ENCODE measurements at regions of chr12 and their contacts with region 1.

Region 1: DNA sequence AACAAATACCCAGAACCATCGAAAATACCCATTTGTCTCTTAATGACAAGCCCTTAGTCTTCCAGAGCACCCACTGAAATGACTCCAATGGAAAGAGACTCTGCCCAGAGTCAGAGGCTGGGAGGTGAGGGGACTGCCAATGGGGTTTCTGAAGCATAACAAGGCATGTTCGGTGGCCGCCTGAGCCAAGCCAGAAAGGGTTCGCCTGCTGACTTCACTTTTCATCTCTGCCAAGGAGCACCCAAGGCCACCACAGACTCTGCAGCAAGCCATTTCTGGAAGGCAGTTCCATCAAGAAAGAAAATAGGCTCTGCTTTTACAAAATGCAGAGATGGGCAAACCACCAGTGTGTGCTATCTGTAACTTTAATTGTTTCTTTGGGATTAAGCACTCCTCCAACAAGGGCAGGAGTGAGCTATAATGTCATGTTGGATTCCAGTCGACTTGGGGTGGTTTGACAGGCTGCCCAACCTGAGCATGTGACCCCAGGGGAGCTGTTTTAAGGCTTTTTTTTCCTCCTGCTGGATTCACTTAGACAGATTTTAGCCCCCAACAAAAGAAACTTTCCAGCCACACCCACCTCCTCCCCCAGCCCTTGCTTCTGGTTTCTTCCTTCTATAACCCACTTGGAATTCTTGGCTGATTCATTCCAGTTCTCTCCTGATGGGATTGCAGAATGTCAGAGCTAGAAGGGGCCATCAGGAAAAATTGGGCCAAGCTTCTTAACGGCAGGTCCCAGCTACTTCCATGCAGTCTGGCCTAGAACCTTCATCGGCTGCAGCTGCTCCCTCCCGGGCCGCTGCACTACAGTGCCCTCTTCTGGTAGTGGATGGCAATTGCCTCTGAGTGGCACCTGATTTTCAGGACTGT is 24.1 kb downstream of the CKAP4 start:
- DNase-seq: peak; percentile 65
- ATAC-seq: peak; percentile 75 to 82

Region 2: GRCh38 chr12:105420659-105421240 is 803.0 kb before region 1 on chr12:
- intact Hi-C with region 1: loop called in 1 of 2 experiments (anchors 1 kb)
- DNase-seq: peak; percentile 75
- ATAC-seq: peak; percentile 87 to 90

Region 3: DNA sequence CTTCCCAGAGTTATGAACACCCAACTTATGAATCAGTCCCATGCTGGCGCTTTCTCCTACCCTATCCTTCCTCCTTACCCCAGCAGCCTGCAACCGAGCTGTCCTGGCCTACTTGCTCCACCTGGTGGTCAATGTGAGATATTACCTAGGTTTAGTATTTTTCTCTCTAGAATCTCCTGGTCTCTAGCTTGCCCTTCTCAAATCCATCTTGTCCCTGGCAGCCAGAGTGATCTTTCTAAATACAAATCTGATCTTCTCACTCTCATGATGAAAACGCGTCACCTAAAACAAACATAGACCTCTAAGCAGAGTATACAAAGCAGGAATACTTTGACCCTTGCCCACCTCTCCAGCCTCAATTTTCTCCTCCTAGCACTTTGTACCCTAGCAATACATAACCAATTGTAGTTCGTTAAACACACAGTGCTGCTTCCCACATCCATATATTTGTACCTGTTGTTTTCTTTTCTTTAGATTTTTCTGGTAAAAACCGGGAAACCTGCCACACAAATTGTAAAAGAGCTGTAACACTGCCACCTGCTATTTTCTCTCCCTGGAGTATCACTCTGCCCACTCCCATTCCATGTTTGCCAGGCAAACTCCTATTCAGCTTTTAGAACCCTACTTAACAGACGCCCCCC is 58.9 kb after region 1 on chr12:
- intact Hi-C with region 1: loop called (anchors 5 kb)
- DNase-seq: no peak
- ATAC-seq: peak; percentile 51 to 85

Region 4: DNA sequence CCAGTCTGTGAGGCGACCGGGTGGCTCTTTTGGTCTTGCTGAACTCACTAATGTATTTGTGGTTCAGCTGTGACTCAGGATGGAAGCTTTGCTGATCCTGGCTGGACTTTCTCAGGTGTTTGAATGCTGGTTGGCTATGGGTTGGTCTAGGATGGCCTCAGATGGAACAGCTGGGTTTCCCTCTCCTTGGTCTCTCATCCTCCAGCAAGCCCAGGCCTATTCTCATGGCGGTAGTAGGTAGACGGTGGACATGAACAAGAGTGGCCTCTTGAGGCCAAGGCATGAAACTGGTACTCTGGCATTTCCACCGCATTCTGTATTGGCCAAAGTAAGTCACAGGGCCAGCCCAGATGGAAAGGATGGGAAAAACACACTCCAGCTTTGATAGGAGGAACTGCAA is 122.0 kb after region 1 on chr12:
- intact Hi-C with region 1: loop called (anchors 2 to 10 kb)
- DNase-seq: no peak
- ATAC-seq: peak; percentile 52 to 56

Region 5: GRCh38 chr12:106357549-106358395 is 134.1 kb after region 1 on chr12 and contains the start of gene POLR3B:
- intact Hi-C with region 1: loop called in 1 of 2 experiments (anchors 10 kb)
- DNase-seq: peak; percentile 96
- ATAC-seq: peak; percentile 95
- total RNA-seq, gene POLR3B: 6.6 to 7.5 TPM